ENCODE measurements at regions of chr16 and their contacts with region 1.

Region 1: DNA sequence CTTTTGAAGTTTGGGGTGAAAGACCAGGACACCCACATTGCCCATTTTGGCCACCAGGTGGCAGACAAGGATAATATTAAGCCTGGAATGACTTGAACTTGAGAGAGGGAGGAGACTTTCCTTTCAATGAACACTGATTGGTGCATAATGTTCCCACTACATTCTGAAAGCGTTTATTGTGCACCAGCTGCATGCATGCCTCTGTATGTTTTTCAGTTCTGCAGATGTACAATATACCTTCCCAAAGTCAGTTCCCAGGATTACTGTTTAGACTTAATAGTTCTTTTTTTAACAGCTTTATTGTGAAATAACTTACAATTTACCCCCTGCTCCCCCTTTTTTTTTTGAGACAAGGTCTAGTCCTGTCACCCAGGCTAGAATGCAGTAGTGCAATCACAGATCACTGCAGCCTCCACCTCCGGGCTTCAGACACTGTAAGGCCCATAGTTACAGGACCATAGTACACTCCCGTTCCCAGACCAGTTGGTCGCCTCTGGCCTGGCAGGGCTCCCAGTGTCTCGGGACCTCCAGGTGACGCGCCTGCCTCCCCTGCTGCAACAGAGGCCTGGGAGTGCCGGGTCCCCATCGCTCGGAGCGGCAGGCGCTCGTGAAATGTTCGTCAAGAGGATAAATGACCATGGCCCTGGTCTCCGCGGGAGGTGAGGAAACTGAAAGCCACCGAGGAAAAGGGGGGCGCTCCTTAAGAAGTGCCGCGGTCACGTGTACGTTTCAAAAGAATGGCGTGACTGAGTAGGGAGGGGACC is 12.2 kb downstream of the CES2 start:
- DNase-seq: peak; percentile 82
- ATAC-seq: peak; percentile 88
- H3K4me3 ChIP-seq: peak overlapping the region; percentile 56
- H3K27ac ChIP-seq: no peak overlapping the region
- H3K4me1 ChIP-seq: peaks cover 6% of the 10 kb centered on the region
- H3K27me3 ChIP-seq: peaks cover 16% of the 10 kb centered on the region; the same call in 1 of the 2 replicates
- CTCF ChIP-seq: peak; percentile 82
- POLR2A ChIP-seq: no peak
- RAD21 ChIP-seq: peak; percentile 73

Region 2: DNA sequence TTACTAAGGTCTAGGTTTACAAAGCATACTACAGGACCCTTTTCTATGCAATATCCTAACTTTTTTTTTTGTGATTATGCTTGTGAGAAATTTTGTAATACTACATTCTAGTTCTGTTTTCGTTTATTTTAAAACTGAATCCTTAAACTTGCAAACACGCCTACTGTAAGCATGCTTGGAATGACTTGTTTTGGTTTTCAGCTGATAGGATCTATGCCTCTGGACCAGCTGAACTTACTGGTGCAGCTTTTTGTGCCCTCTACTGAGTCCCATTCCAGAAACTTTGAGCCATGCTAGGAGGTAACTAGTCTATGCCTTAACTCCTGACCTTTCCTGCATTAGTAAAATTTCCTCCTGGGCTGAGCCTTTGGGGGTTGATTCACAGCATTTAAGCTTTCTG is 61.1 kb before region 1 on chr16:
- CTCF ChIA-PET with region 1: no interaction called
- POLR2A ChIA-PET with region 1: interaction called, 10 read pairs
- dilution Hi-C with region 1: no loop called
- in situ Hi-C with region 1: no loop called
- intact Hi-C with region 1: no loop called
- DNase-seq: peak; percentile 46
- ATAC-seq: peak; percentile 95
- H3K4me3 ChIP-seq: no peak overlapping the region
- H3K27ac ChIP-seq: peak overlapping the region; percentile 81; the same call in 1 of the 2 replicates
- H3K4me1 ChIP-seq: peaks cover 16% of the 10 kb centered on the region
- H3K27me3 ChIP-seq: no peaks in the 10 kb centered on the region
- CTCF ChIP-seq: no peak
- POLR2A ChIP-seq: no peak
- RAD21 ChIP-seq: no peak

Region 3: DNA sequence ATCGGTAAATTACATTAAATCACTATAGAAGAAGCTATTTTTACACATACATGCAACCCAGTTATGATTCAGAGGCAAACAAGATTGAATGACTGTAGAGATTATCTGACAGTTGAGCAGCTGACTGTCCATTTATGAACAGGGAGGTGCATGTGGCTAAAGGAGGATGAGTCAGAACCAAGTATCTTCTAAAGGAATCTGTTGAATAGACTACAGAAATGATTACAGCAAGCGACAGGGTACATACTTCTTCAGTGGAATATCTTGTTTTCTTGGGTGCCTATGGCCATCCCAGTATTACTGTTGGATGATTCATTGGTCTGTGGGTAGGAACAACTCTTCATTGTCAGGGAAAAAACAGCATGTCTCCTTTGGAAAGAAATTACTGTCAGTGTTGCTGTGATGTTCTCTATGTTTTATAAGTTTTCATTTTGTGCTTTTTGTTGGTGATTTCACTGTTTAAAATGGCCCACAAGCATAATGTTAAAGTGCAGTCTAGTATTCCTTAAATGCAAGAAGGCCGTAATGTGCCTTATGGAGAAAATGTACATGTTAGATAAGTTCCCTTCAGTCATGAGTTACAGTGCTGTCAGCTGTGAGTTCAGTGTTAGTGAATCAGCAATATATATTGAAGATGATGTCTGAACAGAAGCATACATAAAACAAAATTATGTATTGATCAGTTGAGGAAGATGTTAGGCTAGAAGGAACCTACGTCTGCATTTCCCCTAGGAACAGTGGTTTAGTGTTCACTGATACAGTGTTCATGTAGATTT is 108.4 kb after region 1 on chr16:
- CTCF ChIA-PET with region 1: no interaction called
- POLR2A ChIA-PET with region 1: no interaction called
- dilution Hi-C with region 1: no loop called
- in situ Hi-C with region 1: no loop called
- intact Hi-C with region 1: no loop called
- DNase-seq: peak; percentile 99
- ATAC-seq: peak; percentile 98
- H3K4me3 ChIP-seq: no peak overlapping the region
- H3K27ac ChIP-seq: no peak overlapping the region; the same call in 1 of the 2 replicates
- H3K4me1 ChIP-seq: no peaks in the 10 kb centered on the region; the same call in 1 of the 2 replicates
- H3K27me3 ChIP-seq: no peaks in the 10 kb centered on the region
- CTCF ChIP-seq: no peak
- POLR2A ChIP-seq: no peak
- RAD21 ChIP-seq: no peak

Region 4: GRCh38 chr16:67159593-67160406 is 212.3 kb after region 1 on chr16 and contains the starts of genes FBXL8 and TRADD:
- CTCF ChIA-PET with region 1: no interaction called
- POLR2A ChIA-PET with region 1: no interaction called
- dilution Hi-C with region 1: no loop called
- in situ Hi-C with region 1: no loop called
- intact Hi-C with region 1: no loop called
- DNase-seq: peak; percentile 41
- ATAC-seq: peak; percentile 73
- H3K4me3 ChIP-seq: peak within 1 kb of the TSS; percentile 86
- H3K27ac ChIP-seq: peak within 1 kb of the TSS; percentile 69
- H3K4me1 ChIP-seq: peaks cover 20% of the 10 kb centered on the region; the same call in 1 of the 2 replicates
- H3K27me3 ChIP-seq: peaks cover 10% of the 10 kb centered on the region; the same call in 1 of the 2 replicates
- CTCF ChIP-seq: peak; percentile 48
- POLR2A ChIP-seq: peak; percentile 43; the same call in 1 of the 2 replicates
- RAD21 ChIP-seq: peak; percentile 12; the same call in 1 of the 2 replicates
- total RNA-seq, gene FBXL8: 1.9 and 2.3 TPM in 2 replicates
- total RNA-seq, gene TRADD: 8.1 and 8.6 TPM in 2 replicates

Measured in IMR-90 (cell line).